CD4-positive, alpha-beta T cell (primary cell): ENCODE measurements at regions of chr15 and their contacts with region 1.

Region 1: DNA sequence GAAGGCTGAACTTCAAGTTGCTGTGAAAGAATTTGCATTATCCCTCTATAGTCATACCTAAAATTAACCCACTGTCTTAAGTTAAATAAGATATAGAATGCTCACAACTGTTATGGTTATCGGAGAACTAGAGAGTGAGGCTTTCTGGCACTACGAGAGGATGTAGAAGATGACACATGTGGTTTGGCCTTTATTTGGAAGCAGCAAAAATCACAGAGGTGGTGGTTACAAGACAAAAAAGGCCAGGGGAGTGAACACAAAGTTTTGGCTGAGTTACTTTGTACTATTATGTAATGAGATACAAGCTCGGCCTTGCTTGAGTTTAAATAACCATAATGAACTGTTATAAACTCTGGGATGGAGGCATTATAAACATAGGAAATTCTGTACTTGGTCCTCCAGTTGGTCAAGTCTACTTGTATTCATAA is 78.3 kb upstream of the ICE2 start:
- DNase-seq: peak in 4 of 14 experiments; percentile 54 to 75 (median 66)
- ATAC-seq: peak; percentile 81
- H3K4me3 ChIP-seq: no peak overlapping the region
- H3K4me3 Mint-ChIP-seq: peak overlapping the region; percentile 28
- H3K27ac ChIP-seq: peak overlapping the region; percentile 40 to 49
- H3K27ac Mint-ChIP-seq: peak overlapping the region; percentile 85
- H3K4me1 ChIP-seq: peaks cover 44% of the 10 kb centered on the region
- H3K4me1 Mint-ChIP-seq: peaks cover 85% of the 10 kb centered on the region
- H3K27me3 ChIP-seq: no peaks in the 10 kb centered on the region
- H3K27me3 Mint-ChIP-seq: no peaks in the 10 kb centered on the region
- CTCF ChIP-seq: no peak

Region 2: GRCh38 chr15:60362321-60363086 is 194.7 kb before region 1 on chr15:
- CTCF ChIA-PET with region 1: no interaction called
- POLR2A ChIA-PET with region 1: no interaction called
- intact Hi-C with region 1: no loop called
- DNase-seq: peak in 5 of 14 experiments; percentile 6 to 50 (median 25)
- ATAC-seq: peak; percentile 75
- H3K4me3 ChIP-seq: no peak overlapping the region
- H3K4me3 Mint-ChIP-seq: no peak overlapping the region
- H3K27ac ChIP-seq: no peak overlapping the region
- H3K27ac Mint-ChIP-seq: peak overlapping the region; percentile 62
- H3K4me1 ChIP-seq: peaks cover 15% of the 10 kb centered on the region
- H3K4me1 Mint-ChIP-seq: peaks cover 19% of the 10 kb centered on the region
- H3K27me3 ChIP-seq: no peaks in the 10 kb centered on the region
- H3K27me3 Mint-ChIP-seq: no peaks in the 10 kb centered on the region
- CTCF ChIP-seq: no peak

Region 3: GRCh38 chr15:60580650-60581376 is 23.6 kb after region 1 on chr15:
- CTCF ChIA-PET with region 1: interaction called, 5 read pairs
- POLR2A ChIA-PET with region 1: interaction called, 16 read pairs
- intact Hi-C with region 1: no loop called
- DNase-seq: peak in 9 of 14 experiments; percentile 32 to 92 (median 60)
- ATAC-seq: peak; percentile 83
- H3K4me3 ChIP-seq: peak overlapping the region; percentile 10
- H3K4me3 Mint-ChIP-seq: peak overlapping the region; percentile 56
- H3K27ac ChIP-seq: peak overlapping the region; percentile 62 to 76
- H3K27ac Mint-ChIP-seq: peak overlapping the region; percentile 85
- H3K4me1 ChIP-seq: peaks cover 61% of the 10 kb centered on the region
- H3K4me1 Mint-ChIP-seq: peaks cover 90% of the 10 kb centered on the region
- H3K27me3 ChIP-seq: no peaks in the 10 kb centered on the region
- H3K27me3 Mint-ChIP-seq: no peaks in the 10 kb centered on the region
- CTCF ChIP-seq: no peak